BJ (cell line): ENCODE measurements at regions of chr20 and their contacts with region 1.

Region 1: DNA sequence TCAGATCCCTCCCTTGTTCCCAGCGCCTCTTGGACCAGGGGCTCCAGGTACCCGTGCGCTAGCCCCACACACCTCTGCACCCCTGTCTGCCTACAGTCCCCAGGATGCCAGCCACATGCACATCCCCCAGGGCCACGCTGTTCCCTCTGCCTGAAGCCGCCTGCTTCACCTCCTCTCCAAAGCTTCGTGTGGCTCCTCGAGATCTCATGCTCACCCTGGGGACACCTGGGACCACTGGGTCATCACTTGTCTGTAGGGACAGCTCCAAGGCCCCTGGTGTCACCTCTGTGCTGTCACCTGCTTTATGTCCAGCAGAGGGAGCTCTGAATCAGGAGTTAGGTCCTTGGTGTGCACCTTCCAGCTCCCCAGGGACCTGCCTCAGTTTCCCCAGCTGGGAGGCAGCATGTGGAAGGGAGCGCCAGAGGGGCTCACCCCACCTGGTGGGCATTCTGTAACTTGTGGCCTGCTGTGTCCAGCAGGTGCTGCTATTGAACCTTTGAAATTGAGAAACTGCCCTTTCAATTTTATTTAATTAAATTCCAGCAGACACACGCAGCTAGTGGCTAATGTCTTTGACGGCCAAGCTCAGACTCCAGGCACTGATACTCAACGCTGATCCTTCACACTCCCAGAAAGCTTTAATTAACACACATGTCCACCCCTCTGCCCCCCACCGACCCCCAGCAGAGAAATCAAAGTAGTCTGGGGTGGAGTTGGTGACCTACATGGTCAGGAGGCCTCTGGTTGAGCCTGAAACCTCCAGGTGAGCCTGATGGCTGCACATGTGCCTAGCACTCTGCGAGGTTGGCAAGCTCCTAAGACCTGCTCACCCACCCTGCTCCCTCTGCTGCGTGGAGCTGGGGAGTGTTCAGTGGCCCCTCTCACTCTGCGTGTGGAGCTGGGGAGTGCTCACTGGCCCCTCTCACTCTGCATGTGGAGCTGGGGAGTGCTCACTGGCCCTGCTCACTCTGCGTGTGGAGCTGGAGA is 7.6 kb upstream of the YTHDF1 start:
- DNase-seq: no peak
- H3K4me3 ChIP-seq: no peak overlapping the region
- H3K27me3 ChIP-seq: peaks cover 12% of the 10 kb centered on the region
- CTCF ChIP-seq: peak; percentile 82

Region 2: GRCh38 chr20:63129991-63130657 is 93.4 kb before region 1 on chr20:
- CTCF ChIA-PET with region 1: no interaction called
- POLR2A ChIA-PET with region 1: no interaction called
- DNase-seq: no peak
- H3K4me3 ChIP-seq: no peak overlapping the region
- H3K27me3 ChIP-seq: peaks cover 6% of the 10 kb centered on the region
- CTCF ChIP-seq: no peak

Region 3: DNA sequence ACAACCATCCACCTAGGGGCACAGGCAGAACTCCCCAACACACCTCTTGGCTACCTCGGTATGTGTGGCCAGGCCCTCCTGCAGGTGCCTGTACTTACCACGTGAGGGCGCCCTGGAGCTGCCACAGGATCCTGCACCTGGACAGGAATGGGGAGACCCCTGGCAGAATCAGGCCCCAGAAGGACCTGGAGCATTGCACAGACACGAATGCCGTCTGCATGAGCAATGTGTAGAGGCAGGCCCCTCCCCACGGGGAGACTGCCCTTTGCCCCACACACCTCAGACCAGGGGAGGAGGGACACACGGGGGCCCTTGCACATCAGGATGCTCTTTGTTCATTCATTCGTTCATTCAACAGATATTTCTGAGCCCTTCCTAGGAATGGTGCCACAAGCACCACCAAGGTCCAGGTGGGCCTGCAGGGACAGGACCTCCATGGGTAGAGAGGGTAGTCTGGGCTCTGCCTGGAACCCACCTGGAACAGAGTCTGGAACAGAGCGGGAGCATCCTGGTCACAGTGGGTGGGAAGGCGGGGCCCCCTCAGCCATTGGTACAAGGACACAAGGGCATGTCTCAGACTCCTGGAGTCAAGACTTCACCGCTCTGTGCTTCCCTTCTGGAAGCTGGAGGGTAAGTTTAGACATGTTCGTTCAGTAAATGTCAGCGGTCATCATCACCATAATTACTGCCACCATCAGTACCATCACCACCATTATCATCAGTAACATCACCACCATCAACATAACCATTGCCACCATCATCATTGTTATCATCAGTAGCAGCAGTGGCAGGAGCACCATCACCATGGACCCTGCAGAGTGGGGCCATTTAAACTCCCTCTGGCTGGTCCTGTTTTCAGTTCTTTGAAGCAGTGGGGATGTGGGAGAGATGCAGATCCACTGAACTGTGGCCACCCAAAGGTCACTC is 39.8 kb before region 1 on chr20:
- CTCF ChIA-PET with region 1: interaction called, 12 read pairs
- POLR2A ChIA-PET with region 1: no interaction called
- DNase-seq: no peak
- H3K4me3 ChIP-seq: no peak overlapping the region
- H3K27me3 ChIP-seq: peaks cover 22% of the 10 kb centered on the region
- CTCF ChIP-seq: peak; percentile 91

Region 4: GRCh38 chr20:63253438-63254236 is 30.1 kb after region 1 on chr20:
- CTCF ChIA-PET with region 1: interaction called, 64 read pairs
- POLR2A ChIA-PET with region 1: no interaction called
- DNase-seq: no peak
- H3K4me3 ChIP-seq: peak overlapping the region; percentile 3; the same call in 1 of the 2 replicates
- H3K27me3 ChIP-seq: peaks cover 40% of the 10 kb centered on the region
- CTCF ChIP-seq: no peak

Region 5: GRCh38 chr20:63272584-63273579 is 49.4 kb after region 1 on chr20 and contains the start of gene ARFGAP1:
- CTCF ChIA-PET with region 1: interaction called, 37 read pairs
- POLR2A ChIA-PET with region 1: no interaction called
- DNase-seq: no peak
- H3K4me3 ChIP-seq: peak within 1 kb of the TSS; percentile 99
- H3K27me3 ChIP-seq: peaks cover 1% of the 10 kb centered on the region; the same call in 1 of the 2 replicates
- CTCF ChIP-seq: no peak
- polyA plus RNA-seq, gene ARFGAP1: 49.8 and 76.5 TPM in 2 replicates

Region 6: DNA sequence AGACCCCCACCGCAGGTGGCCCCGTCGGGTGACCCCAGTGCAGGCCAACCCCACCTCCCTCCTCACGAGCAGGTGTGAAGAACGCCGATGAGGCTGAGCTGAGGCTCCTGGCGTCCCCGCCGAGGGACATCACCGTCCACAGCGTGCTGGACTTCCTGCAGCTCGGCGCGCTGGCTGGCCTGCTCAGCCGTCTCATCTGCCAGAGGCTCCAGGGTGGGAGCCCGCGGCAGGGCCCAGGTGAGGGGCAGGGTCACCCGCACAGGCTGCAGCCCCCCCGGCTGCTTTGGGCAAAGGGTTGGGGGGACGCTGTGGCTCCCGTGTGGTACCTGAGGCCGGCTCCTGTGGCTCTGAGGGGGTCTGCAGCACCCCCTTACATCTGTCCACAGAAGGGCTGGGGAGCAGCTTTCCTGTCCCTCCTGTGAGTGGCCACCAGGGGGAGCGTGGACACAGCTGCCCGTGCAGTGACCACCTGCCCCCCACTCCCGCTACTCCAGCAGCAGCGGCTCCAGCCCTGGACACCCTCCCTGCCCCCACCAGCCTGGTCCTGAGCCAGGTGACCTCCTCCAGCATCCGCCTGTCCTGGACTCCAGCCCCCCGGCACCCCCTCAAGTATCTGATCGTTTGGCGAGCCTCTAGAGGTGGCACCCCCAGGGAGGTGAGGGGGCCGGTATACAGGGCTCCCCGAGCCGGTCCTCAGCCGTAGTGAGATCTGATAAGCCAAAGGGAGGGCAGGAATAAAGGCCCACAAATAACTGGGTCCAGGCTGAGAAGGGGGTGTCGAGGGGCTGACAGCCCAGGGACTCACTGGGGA is 86.0 kb after region 1 on chr20:
- CTCF ChIA-PET with region 1: interaction called, 12 read pairs
- POLR2A ChIA-PET with region 1: no interaction called
- DNase-seq: no peak
- H3K4me3 ChIP-seq: no peak overlapping the region
- H3K27me3 ChIP-seq: no peaks in the 10 kb centered on the region; the same call in 1 of the 2 replicates
- CTCF ChIP-seq: peak; percentile 86

Region 7: DNA sequence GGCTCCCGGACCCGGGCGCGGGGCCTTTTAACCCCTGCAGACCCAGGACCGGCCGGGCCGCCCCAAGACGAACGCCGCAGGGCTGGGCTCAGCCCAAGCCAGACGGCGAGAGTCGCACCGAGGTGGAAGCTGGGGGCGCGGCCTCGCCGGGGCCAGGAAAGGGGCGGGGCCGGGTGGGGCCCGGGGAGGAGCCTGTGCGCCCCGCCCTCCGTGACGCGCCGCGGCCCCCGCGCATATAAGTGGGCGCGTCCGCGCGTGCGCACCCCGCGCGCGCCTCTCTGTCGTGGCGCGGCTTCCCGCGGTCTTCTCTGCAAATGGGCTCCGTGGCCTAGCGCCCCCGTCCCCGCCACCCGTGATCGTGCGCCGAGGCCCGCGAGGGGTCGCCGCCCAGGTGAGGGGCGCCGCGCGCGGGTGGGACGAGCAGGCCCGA is 297.0 kb after region 1 on chr20 and contains the start of gene PPDPF:
- CTCF ChIA-PET with region 1: no interaction called
- POLR2A ChIA-PET with region 1: interaction called, 14 read pairs
- DNase-seq: no peak
- H3K4me3 ChIP-seq: peak within 1 kb of the TSS; percentile 93
- H3K27me3 ChIP-seq: no peaks in the 10 kb centered on the region
- CTCF ChIP-seq: no peak
- polyA plus RNA-seq, gene PPDPF: 16.5 and 26.9 TPM in 2 replicates